PC-3 (cell line): ENCODE measurements at regions of chr12 and their contacts with region 1.

Region 1: DNA sequence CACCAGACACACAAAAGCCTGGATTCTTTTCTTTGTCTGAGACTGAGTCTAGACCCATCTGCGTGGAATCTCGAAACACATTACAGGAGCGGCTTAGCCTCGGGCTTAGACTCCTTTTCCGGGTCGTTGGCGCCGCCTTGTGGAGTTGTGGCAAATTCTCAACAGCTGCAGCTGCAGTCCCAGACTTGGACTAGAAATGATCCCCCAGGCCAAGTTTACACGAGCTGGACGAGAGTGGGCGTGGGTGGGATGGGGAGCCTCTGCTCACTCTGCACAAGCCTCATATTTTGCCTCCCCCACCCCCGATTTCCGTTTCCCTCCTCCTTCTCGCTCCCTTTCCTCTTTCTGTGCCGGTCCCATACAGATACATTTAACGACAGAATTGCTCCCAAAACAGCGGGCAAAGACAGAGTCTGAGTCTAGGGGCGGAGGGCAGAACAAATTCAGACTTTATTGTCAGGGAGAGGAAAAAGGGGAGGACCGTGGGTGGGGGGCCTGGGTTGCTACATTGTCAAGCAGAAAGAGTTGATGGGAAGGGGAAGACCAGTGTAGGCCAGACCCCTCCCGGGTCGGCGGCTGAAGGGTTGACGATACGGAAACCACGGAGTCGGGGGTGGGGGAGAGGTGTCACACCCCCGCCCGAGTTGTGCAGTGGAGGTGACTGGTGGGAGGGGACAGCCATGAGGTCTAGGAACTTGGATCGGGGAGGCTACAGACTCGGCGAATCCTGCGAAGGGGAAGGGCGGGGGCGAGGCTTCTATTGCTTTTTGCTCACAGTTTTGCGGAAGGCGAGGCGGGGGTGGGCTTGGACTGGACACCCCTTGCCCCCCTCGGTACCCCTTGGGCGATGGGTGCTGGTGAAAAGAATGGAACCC is 4.7 kb upstream of the GPR84 start:
- DNase-seq: peak; percentile 91
- ATAC-seq: peak; percentile 79
- H3K4me3 ChIP-seq: peak overlapping the region; percentile 37; the same call in 1 of the 2 replicates
- H3K27ac ChIP-seq: no peak overlapping the region
- H3K4me1 ChIP-seq: peaks cover 14% of the 10 kb centered on the region
- H3K27me3 ChIP-seq: no peaks in the 10 kb centered on the region
- CTCF ChIP-seq: peak; percentile 93

Region 2: DNA sequence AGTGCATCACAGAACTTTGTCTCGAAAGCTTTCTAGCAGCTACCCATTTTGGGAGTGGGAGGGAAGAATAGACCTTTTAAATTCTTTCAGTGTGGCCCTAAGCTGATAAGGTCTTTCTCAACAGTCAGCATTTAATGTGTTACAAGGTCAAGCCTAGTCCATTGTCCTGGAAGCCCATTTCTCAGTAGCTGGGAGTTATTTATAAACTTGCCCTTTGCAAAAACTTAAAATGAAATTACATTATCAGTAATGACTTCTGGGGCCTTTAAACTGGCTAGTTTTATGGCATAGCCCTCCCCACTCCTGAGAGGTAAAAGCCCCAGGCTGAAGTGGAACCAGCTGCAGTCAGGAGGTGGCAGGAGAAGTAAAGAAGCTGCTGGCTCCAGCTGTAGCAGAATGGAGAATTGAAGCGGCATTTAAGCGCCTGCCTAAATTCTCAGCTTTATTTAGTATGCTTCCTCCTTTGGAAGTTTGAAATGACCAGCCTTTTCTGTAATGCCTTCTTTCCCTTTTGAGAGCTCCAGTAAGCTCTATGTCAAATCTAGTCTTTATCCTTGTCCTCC is 31.6 kb before region 1 on chr12:
- CTCF ChIA-PET with region 1: interaction called, 14 read pairs
- POLR2A ChIA-PET with region 1: no interaction called
- intact Hi-C with region 1: no loop called
- DNase-seq: no peak
- ATAC-seq: no peak
- H3K4me3 ChIP-seq: no peak overlapping the region
- H3K27ac ChIP-seq: no peak overlapping the region
- H3K4me1 ChIP-seq: no peaks in the 10 kb centered on the region
- H3K27me3 ChIP-seq: no peaks in the 10 kb centered on the region
- CTCF ChIP-seq: no peak

Region 3: GRCh38 chr12:54379401-54380201 is 10.7 kb after region 1 on chr12:
- CTCF ChIA-PET with region 1: interaction called, 26 read pairs
- POLR2A ChIA-PET with region 1: no interaction called
- intact Hi-C with region 1: loop called (anchors 1 kb)
- DNase-seq: peak; percentile 94
- ATAC-seq: peak; percentile 80
- H3K4me3 ChIP-seq: peak overlapping the region; percentile 73
- H3K27ac ChIP-seq: peak overlapping the region; percentile 37; the same call in 1 of the 2 replicates
- H3K4me1 ChIP-seq: peaks cover 16% of the 10 kb centered on the region
- H3K27me3 ChIP-seq: no peaks in the 10 kb centered on the region
- CTCF ChIP-seq: peak; percentile 100